ENCODE measurements at regions of chr1 and their contacts with region 1.

Region 1: DNA sequence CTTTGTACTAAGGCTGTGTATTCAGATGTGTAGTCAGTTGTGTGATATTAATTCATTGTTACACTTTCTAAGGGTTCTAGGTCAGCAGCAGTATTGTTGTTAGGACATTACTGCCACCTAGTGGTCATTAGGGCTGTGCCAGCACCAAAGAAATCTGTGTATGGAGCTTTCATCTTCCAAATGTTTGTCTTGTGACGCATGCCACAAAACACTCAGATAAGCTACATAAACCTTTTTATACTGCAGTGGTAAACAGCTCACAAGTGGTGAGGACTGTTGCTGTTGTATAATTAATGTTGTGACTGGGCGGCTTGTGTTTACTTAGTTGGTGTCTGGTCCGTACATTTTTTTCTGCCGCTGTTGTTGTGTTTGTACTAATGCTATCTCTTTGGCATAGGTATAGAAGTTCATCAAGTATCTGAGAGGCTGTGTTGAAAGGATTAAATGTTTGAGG is 51.7 kb downstream of the S1PR1 start:
- DNase-seq: peak; percentile 72
- ATAC-seq: peak; percentile 94
- H3K4me3 ChIP-seq: peak overlapping the region in 1 of 2 experiments; percentile 30; a peak in 2 of 4 replicates
- H3K27ac ChIP-seq: no peak overlapping the region
- H3K4me1 ChIP-seq: peaks cover 0 to 6% of the 10 kb centered on the region in 2 experiments; a peak in 1 of 4 replicates
- H3K27me3 ChIP-seq: no peaks in the 10 kb centered on the region; the same call in 1 of the 2 replicates
- CTCF ChIP-seq: peak; percentile 74 to 98 (median 89)
- POLR2A ChIP-seq: no peak
- RAD21 ChIP-seq: peak; percentile 90

Region 2: GRCh38 chr1:101025657-101026504 is 262.6 kb before region 1 on chr1 and contains the start of gene DPH5:
- CTCF ChIA-PET with region 1: no interaction called
- POLR2A ChIA-PET with region 1: no interaction called
- RAD21 ChIA-PET with region 1: no interaction called
- intact Hi-C with region 1: loop called (anchors 10 kb)
- DNase-seq: peak; percentile 82
- ATAC-seq: peak; percentile 91
- H3K4me3 ChIP-seq: peak within 1 kb of the TSS; percentile 89 to 92
- H3K27ac ChIP-seq: peak within 1 kb of the TSS; percentile 49
- H3K4me1 ChIP-seq: peaks cover 4 to 12% of the 10 kb centered on the region in 2 experiments; a peak in 3 of 4 replicates
- H3K27me3 ChIP-seq: no peaks in the 10 kb centered on the region
- CTCF ChIP-seq: no peak
- POLR2A ChIP-seq: peak; percentile 81
- RAD21 ChIP-seq: no peak
- total RNA-seq, gene DPH5: 55.8 TPM

Region 3: GRCh38 chr1:101190441-101190840 is 98.1 kb before region 1 on chr1:
- CTCF ChIA-PET with region 1: no interaction called
- POLR2A ChIA-PET with region 1: no interaction called
- RAD21 ChIA-PET with region 1: no interaction called
- intact Hi-C with region 1: no loop called
- DNase-seq: no peak
- ATAC-seq: no peak
- H3K4me3 ChIP-seq: no peak overlapping the region
- H3K27ac ChIP-seq: no peak overlapping the region
- H3K4me1 ChIP-seq: peaks cover 0 to 3% of the 10 kb centered on the region in 2 experiments; a peak in 1 of 4 replicates
- H3K27me3 ChIP-seq: no peaks in the 10 kb centered on the region
- CTCF ChIP-seq: no peak
- POLR2A ChIP-seq: no peak
- RAD21 ChIP-seq: no peak

Region 4: DNA sequence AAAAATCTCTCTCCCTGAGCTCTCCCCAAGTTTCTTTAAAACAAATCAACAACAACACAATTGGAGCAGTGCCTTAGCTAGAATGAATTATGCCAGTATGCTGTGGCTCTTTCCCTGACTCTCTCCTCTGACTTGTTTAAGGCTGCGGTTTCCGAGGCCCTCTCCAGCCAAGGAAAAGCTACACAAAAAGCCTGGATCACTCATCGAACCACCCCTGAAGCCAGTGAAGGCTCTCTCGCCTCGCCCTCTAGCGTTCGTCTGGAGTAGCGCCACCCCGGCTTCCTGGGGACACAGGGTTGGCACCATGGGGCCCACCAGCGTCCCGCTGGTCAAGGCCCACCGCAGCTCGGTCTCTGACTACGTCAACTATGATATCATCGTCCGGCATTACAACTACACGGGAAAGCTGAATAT is 49.8 kb before region 1 on chr1:
- CTCF ChIA-PET with region 1: interaction called, 8 read pairs
- POLR2A ChIA-PET with region 1: no interaction called
- RAD21 ChIA-PET with region 1: interaction called, 3 to 10 read pairs
- intact Hi-C with region 1: loop called (anchors 1 kb)
- DNase-seq: peak; percentile 71
- ATAC-seq: peak; percentile 90
- H3K4me3 ChIP-seq: no peak overlapping the region
- H3K27ac ChIP-seq: no peak overlapping the region
- H3K4me1 ChIP-seq: peaks cover 4 to 17% of the 10 kb centered on the region in 2 experiments; a peak in 2 of 4 replicates
- H3K27me3 ChIP-seq: no peaks in the 10 kb centered on the region
- CTCF ChIP-seq: peak; percentile 66 to 96 (median 93)
- POLR2A ChIP-seq: no peak
- RAD21 ChIP-seq: peak; percentile 76